Breast epithelium (tissue), 4 donors: ENCODE measurements at regions of chr3 and their contacts with region 1.

Region 1: GRCh38 chr3:170442947-170443346 is 24.3 kb downstream of the CLDN11 start:
- DNase-seq: no peak
- H3K4me3 ChIP-seq: no peak overlapping the region
- H3K27ac ChIP-seq: no peak overlapping the region
- H3K4me1 ChIP-seq: no peaks in the 10 kb centered on the region
- H3K27me3 ChIP-seq: no peaks in the 10 kb centered on the region
- CTCF ChIP-seq: no peak
- POLR2A ChIP-seq: no peak

Region 2: DNA sequence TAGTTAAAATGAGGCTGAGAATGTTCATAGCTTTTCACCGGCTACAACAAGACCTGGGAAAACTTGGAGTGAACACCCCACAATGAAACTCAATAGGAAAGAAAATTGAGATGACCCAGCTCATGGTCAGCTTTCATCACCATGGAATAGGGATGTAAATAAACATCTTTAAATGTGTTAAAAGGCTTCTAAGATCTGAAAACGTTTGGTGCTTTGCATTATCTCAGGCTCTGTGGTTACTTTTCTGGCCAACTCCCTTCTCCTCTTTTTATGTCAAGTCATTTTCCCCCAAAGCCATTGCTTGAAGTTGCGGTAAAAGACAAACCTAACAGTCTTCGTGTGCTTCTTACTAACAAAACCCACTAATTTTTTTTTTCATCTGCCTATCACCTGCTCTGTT is 975.2 kb before region 1 on chr3:
- intact Hi-C with region 1: no loop called
- DNase-seq: no peak
- H3K4me3 ChIP-seq: no peak overlapping the region
- H3K27ac ChIP-seq: no peak overlapping the region
- H3K4me1 ChIP-seq: no peaks in the 10 kb centered on the region
- H3K27me3 ChIP-seq: peaks cover 0 to 2% of the 10 kb centered on the region in 2 donors
- CTCF ChIP-seq: no peak
- POLR2A ChIP-seq: no peak

Region 3: DNA sequence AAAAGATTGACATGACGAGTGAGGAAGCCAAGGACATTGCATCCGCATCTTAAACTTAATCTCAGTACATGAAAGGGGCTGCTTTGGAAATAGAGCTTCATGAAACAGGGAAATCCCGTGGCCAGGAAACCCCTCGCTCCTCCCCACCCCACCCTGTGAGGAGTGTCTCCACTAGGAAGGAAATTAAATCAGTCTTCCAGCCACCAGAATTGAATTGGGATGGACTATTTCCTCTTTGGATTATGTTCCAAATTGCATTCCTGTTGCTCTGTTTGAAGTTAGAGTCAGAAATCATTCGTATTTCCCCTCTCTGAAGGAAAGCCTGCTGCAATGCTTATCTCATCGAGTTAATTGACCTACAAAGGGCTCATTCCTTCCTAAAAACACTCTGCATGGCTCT is 11.6 kb after region 1 on chr3:
- intact Hi-C with region 1: no loop called
- DNase-seq: no peak
- H3K4me3 ChIP-seq: no peak overlapping the region
- H3K27ac ChIP-seq: no peak overlapping the region
- H3K4me1 ChIP-seq: no peaks in the 10 kb centered on the region
- H3K27me3 ChIP-seq: no peaks in the 10 kb centered on the region
- CTCF ChIP-seq: no peak
- POLR2A ChIP-seq: no peak

Region 4: GRCh38 chr3:170469151-170470062 is 26.5 kb after region 1 on chr3:
- intact Hi-C with region 1: loop called (anchors 1 kb)
- DNase-seq: no peak
- H3K4me3 ChIP-seq: no peak overlapping the region
- H3K27ac ChIP-seq: peak overlapping the region; percentile 58 to 69
- H3K4me1 ChIP-seq: peaks cover 0 to 4% of the 10 kb centered on the region in 2 donors
- H3K27me3 ChIP-seq: no peaks in the 10 kb centered on the region
- CTCF ChIP-seq: no peak
- POLR2A ChIP-seq: no peak

Region 5: DNA sequence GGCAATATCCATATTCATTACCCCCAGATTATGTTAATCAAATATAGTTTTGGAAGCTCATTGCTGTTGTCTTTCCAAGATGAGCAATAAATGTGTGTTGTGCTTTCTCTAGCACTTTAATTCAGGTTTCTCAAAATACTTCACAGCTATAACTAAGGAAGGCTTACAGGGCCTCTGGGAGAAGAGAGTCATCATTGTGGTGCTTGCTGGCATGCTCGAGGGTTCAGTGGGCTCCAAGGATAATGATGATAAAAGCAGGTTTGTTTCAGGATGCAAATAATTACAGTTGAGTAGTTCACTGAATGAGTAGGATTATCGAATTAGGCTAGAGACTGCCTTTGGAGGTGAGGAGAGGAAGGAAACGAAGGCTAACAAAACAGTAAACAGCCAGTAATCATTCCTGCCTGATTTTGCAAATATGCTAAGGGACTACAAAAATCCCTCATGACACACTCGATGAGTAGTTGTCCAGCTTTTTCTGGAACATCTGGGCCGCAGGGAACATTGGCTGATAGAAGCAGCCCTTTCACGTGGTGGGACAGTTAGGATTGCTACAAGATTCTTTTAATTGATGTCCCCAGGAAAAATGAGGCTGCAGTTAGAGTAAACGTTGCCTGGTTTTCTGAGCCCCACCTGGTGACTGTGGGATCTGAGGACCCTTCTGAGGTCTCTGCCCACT is 88.8 kb after region 1 on chr3:
- intact Hi-C with region 1: no loop called
- DNase-seq: peak in 1 of 2 donors; percentile 23
- H3K4me3 ChIP-seq: no peak overlapping the region
- H3K27ac ChIP-seq: peak overlapping the region; percentile 52 to 68
- H3K4me1 ChIP-seq: no peaks in the 10 kb centered on the region
- H3K27me3 ChIP-seq: no peaks in the 10 kb centered on the region
- CTCF ChIP-seq: no peak
- POLR2A ChIP-seq: no peak